ENCODE measurements at regions of chr2 and their contacts with region 1.

Region 1: DNA sequence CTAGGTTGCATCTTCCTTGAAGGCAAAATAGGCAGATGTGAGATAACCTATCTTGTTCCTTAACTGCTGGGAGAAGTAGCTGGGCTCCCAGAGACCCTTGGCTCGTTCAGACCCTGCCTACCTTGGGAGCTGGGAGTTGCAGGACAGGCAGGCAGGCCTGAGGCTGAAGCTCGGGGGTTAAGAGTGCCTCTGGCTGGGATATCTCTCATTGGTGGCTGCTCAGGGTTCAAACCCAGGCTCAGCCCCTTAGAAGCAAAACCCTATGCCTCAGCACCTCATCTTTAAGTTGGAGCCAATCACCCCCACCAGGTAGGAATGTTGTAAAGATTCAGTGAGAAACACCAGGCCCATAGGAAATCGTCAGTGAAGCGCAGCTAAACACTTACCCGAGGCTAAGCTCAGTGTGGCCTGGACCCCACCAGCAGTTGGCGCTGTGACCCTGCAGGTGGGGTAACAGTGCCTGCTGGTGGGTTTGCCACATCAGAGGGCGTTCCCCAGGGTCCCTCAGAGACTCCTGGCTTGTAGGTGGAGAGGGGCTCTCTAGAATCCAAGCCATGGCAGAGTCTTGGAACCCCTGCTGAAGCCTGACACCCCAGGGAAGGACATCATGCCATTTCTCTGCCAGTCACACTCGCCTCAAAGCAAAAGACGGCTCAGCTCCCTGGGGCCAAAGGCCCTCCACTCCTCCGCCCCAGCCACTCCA is 54.6 kb upstream of the GPR17 start:
- DNase-seq: peak; percentile 44 to 56 (median 49)
- H3K4me3 ChIP-seq: no peak overlapping the region
- H3K4me3 Mint-ChIP-seq: no peak overlapping the region
- H3K27ac ChIP-seq: no peak overlapping the region
- H3K27ac Mint-ChIP-seq: no peak overlapping the region
- H3K4me1 ChIP-seq: no peaks in the 10 kb centered on the region
- H3K4me1 Mint-ChIP-seq: peaks cover 0 to 10% (median 2%) of the 10 kb centered on the region in 4 donors
- H3K27me3 ChIP-seq: no peaks in the 10 kb centered on the region
- H3K27me3 Mint-ChIP-seq: peaks cover 0 to 2% of the 10 kb centered on the region in 2 donors

Region 2: DNA sequence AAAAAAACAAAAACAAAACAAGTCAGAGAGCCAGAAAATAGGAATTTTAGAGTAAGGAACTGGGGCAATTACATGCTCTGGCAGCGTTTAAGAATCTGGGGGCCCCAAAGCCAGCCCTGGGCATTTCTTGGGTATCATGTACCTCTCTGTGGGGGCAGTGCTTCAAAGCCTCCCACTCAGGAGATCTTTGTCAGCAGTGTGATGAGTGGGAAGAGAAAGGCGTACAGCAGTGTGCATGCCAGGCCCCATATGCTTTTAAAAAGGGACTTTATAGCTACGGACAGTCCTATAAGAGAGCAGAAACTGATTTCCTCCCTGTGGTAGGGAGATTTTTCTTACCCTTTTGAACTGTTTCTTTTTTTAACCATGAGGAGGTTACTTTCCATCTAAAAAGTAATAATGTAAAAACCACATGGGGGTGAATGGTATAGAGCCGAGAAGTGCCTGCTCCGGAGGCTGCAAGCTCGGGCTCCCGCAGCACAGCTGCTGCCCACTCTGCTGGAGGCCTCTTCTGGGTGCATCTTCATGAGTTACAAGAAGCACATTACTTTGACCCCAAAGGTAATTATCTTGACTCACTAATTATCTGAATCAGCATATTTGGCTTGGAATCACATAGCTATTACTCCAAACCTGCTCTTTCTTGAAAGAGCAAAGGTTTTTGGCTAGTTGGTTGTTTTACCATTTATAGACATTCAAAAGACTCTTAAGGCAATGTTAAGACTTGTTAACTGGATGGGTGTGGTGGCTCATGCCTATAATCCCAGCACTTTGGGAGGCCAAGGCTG is 126.7 kb before region 1 on chr2:
- CTCF ChIA-PET with region 1: no interaction called
- POLR2A ChIA-PET with region 1: no interaction called
- intact Hi-C with region 1: no loop called
- DNase-seq: no peak
- H3K4me3 ChIP-seq: no peak overlapping the region
- H3K4me3 Mint-ChIP-seq: peak overlapping the region in 1 of 8 donors; percentile 11
- H3K27ac ChIP-seq: no peak overlapping the region
- H3K27ac Mint-ChIP-seq: peak overlapping the region in 3 of 7 donors; percentile 0 to 57 (median 7)
- H3K4me1 ChIP-seq: peaks cover 16% of the 10 kb centered on the region
- H3K4me1 Mint-ChIP-seq: peaks cover 14 to 26% (median 17%) of the 10 kb centered on the region in 4 donors
- H3K27me3 ChIP-seq: no peaks in the 10 kb centered on the region
- H3K27me3 Mint-ChIP-seq: no peaks in the 10 kb centered on the region

Region 3: DNA sequence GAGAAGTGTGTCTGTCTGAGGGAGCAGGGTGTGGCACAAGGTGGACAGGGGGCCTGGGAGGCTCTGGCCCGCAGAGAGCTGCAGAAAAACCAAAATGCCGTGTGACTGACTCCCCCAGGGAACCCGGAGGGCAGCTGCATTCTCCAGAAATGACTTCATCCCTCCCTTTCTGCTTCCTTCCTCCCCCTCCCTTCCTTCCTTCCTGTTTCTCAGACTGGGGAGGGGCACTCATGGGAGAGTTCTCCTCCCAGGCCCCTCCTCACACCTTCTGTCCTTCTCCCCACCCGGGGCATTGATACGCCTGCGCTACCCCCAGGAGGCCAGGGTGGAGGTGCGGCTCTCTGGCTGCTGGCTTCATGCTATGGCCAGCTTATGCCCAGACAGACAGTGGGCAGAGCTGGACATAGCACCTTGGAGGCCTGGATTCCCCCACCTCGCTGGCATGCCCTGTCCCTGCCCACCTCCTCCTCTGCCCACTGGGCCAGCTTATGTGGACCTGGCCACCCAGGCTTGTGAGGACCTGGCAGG is 46.4 kb after region 1 on chr2:
- CTCF ChIA-PET with region 1: interaction called, 16 read pairs
- POLR2A ChIA-PET with region 1: no interaction called
- intact Hi-C with region 1: no loop called
- DNase-seq: no peak
- H3K4me3 ChIP-seq: no peak overlapping the region
- H3K4me3 Mint-ChIP-seq: peak overlapping the region; percentile 42 to 76 (median 64)
- H3K27ac ChIP-seq: peak overlapping the region; percentile 12
- H3K27ac Mint-ChIP-seq: peak overlapping the region; percentile 68 to 91 (median 86)
- H3K4me1 ChIP-seq: peaks cover 71% of the 10 kb centered on the region
- H3K4me1 Mint-ChIP-seq: peaks cover 11 to 73% (median 40%) of the 10 kb centered on the region in 4 donors
- H3K27me3 ChIP-seq: no peaks in the 10 kb centered on the region
- H3K27me3 Mint-ChIP-seq: no peaks in the 10 kb centered on the region

Measured in CD4-positive, alpha-beta memory T cell (primary cell).